Activated CD4-positive, alpha-beta T cell treated with anti-CD3 and anti-CD28 coated beads for 36 hours (primary cell): ENCODE measurements at regions of chr7 and their contacts with region 1.

Region 1: GRCh38 chr7:8015100-8015748 is 46.6 kb downstream of the GLCCI1 start:
- DNase-seq: no peak
- ATAC-seq: peak; percentile 89
- H3K4me3 Mint-ChIP-seq: no peak overlapping the region
- H3K27ac Mint-ChIP-seq: peak overlapping the region; percentile 2
- H3K4me1 Mint-ChIP-seq: peaks cover 46% of the 10 kb centered on the region
- H3K27me3 Mint-ChIP-seq: no peaks in the 10 kb centered on the region

Region 2: DNA sequence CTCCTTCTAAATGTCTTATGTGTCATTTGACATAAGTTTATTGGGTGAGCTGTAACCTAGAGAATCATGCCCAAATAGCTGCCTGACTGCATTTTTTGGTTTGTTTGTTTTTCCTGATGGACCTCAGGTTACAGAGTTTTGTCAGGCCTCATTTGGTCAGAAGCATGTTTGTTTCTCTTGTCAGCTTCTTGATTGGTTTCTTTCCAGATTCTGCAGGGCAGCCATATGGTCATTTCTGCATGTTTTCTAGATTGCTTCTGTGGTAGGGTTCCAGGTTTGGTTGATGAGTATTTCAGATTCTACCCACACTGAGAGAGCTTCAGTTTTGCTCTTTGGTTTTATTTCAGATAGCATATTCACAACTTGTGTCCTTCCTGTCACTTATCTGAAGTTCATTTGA is 18.6 kb before region 1 on chr7:
- CTCF ChIA-PET with region 1: interaction called, 15 read pairs
- POLR2A ChIA-PET with region 1: no interaction called
- intact Hi-C with region 1: no loop called
- DNase-seq: no peak
- ATAC-seq: no peak
- H3K4me3 Mint-ChIP-seq: no peak overlapping the region
- H3K27ac Mint-ChIP-seq: peak overlapping the region; percentile 76
- H3K4me1 Mint-ChIP-seq: peaks cover 14% of the 10 kb centered on the region
- H3K27me3 Mint-ChIP-seq: no peaks in the 10 kb centered on the region